PC-3 (cell line): ENCODE measurements at regions of chr1 and their contacts with region 1.

Region 1: DNA sequence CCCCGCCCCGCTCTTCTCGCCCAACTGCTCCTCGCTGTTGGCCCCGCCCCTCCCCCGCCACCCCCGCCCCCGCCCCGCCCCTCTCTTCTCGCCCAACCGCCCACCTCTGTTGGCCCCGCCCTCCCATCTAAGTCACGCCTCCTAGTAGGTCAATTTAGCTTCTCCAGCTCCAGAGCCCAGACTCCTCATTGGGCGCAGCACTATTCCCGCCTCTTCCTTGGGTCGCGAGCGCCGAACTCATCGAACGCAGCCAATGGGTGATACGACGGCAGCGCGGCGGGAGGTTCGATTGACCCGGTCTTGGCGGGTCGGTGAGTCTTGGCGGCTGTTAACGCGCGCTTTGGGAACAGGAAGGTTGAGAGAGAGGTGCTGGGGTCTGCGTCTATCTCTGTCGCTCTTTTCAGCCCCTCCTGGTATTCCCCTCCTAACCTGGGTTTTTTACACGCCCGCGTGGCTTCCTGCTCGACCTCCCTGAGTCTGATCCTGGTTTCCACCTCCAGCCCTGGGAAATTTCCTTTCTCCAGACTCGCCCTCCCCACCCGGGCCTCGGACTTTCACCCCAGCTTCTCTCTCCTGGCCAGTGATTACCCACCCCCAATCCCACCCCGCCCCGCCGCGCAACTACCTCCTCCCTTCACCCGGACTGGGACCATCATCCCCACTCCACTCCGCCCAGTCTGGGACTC is at the start of gene RAD54L:
- DNase-seq: peak; percentile 99
- ATAC-seq: peak; percentile 89
- H3K4me3 ChIP-seq: peak within 1 kb of the TSS; percentile 96
- H3K27ac ChIP-seq: peak within 1 kb of the TSS; percentile 50
- H3K4me1 ChIP-seq: peaks cover 22% of the 10 kb centered on the region
- H3K27me3 ChIP-seq: no peaks in the 10 kb centered on the region
- CTCF ChIP-seq: no peak
- total RNA-seq, gene RAD54L: 26.0 and 29.4 TPM in 2 replicates

Region 2: GRCh38 chr1:46021046-46021996 is 226.3 kb before region 1 on chr1:
- CTCF ChIA-PET with region 1: no interaction called
- POLR2A ChIA-PET with region 1: no interaction called
- intact Hi-C with region 1: no loop called
- DNase-seq: peak; percentile 28
- ATAC-seq: peak; percentile 64
- H3K4me3 ChIP-seq: no peak overlapping the region
- H3K27ac ChIP-seq: no peak overlapping the region
- H3K4me1 ChIP-seq: no peaks in the 10 kb centered on the region
- H3K27me3 ChIP-seq: no peaks in the 10 kb centered on the region
- CTCF ChIP-seq: 0 out of 2 replicates have a peak, but pooled peaks have one; percentile 11

Region 3: DNA sequence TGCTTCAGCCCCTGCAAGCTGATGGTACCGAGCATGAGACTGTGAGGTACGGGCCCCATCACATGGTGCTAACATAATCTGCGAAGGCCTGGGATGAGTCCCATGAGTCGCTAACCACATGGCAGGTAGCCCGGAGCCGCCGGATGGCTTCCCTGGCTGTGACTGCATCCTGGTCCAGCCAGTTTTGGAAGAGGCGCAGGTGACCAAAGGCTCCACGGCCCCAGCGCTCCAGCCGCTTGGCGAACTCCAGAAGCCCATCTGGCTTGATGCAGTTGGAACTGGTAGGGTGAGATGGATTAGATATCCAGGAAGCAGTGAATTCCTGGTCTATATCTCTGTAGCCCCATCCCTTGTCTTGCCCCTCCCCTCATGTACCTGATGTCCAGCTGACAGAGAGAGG is 31.2 kb after region 1 on chr1:
- CTCF ChIA-PET with region 1: interaction called, 3 read pairs
- POLR2A ChIA-PET with region 1: interaction called, 12 read pairs
- intact Hi-C with region 1: no loop called
- DNase-seq: peak; percentile 80
- ATAC-seq: peak; percentile 71
- H3K4me3 ChIP-seq: no peak overlapping the region
- H3K27ac ChIP-seq: peak overlapping the region; percentile 25
- H3K4me1 ChIP-seq: peaks cover 8% of the 10 kb centered on the region; the same call in 1 of the 2 replicates
- H3K27me3 ChIP-seq: no peaks in the 10 kb centered on the region
- CTCF ChIP-seq: no peak

Region 4: DNA sequence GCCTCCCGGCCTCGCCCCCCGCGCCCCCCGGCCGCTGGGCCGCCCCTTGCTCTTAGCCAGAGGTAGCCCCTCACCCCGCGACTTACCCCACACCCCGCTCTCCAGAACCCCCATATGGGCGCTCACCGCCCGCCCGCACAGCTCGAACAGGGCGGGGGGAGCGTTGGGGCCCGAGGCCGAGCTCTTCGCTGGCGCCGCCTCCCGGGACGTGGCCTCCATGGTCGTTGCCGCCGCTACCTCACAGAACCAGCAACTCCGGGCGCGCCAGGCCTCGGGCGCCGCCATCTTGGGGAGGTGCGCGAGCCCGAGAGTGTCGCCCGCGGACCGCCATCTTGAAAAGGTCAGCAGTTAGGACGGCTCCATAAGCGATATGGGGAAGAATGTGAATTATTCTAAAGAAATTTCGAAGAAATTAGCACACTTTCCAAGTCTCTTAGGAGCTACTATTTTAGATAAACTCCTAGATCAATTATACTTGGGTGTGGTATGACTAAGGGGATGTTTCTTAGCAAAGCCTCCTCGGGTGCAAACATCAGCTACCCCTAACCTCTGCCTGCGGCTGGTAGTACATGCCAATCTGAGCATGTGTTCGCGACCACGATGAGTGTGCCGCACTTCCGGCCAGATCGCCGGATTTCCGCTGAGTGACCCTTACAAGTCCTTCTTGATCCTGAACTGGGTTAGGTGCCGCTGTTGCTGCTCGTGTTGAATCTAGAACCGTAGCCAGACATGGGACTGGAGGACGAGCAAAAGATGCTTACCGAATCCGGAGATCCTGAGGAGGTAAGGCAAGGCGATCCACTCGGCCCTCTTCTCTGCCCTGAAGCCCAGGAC is 55.7 kb after region 1 on chr1 and contains the starts of genes LRRC41 and UQCRH:
- CTCF ChIA-PET with region 1: interaction called, 4 read pairs
- POLR2A ChIA-PET with region 1: interaction called, 6 read pairs
- intact Hi-C with region 1: loop called (anchors 10 kb)
- DNase-seq: peak; percentile 95
- ATAC-seq: peak; percentile 61
- H3K4me3 ChIP-seq: peak within 1 kb of the TSS; percentile 99
- H3K27ac ChIP-seq: peak within 1 kb of the TSS; percentile 76
- H3K4me1 ChIP-seq: peaks cover 28% of the 10 kb centered on the region
- H3K27me3 ChIP-seq: no peaks in the 10 kb centered on the region
- CTCF ChIP-seq: no peak
- total RNA-seq, gene LRRC41: 52.7 TPM in 2 replicates
- total RNA-seq, gene UQCRH: 642 and 885 TPM in 2 replicates

Region 5: GRCh38 chr1:46340404-46341221 is 93.0 kb after region 1 on chr1 and contains the start of gene NSUN4:
- CTCF ChIA-PET with region 1: interaction called, 7 read pairs
- POLR2A ChIA-PET with region 1: interaction called, 16 read pairs
- intact Hi-C with region 1: no loop called
- DNase-seq: peak; percentile 91
- ATAC-seq: peak; percentile 95
- H3K4me3 ChIP-seq: peak within 1 kb of the TSS; percentile 88
- H3K27ac ChIP-seq: peak within 1 kb of the TSS; percentile 78
- H3K4me1 ChIP-seq: peaks cover 14% of the 10 kb centered on the region
- H3K27me3 ChIP-seq: no peaks in the 10 kb centered on the region
- CTCF ChIP-seq: peak; percentile 84
- total RNA-seq, gene NSUN4: 14.2 and 16.8 TPM in 2 replicates